ENCODE measurements at regions of chr5 and their contacts with region 1.

Region 1: DNA sequence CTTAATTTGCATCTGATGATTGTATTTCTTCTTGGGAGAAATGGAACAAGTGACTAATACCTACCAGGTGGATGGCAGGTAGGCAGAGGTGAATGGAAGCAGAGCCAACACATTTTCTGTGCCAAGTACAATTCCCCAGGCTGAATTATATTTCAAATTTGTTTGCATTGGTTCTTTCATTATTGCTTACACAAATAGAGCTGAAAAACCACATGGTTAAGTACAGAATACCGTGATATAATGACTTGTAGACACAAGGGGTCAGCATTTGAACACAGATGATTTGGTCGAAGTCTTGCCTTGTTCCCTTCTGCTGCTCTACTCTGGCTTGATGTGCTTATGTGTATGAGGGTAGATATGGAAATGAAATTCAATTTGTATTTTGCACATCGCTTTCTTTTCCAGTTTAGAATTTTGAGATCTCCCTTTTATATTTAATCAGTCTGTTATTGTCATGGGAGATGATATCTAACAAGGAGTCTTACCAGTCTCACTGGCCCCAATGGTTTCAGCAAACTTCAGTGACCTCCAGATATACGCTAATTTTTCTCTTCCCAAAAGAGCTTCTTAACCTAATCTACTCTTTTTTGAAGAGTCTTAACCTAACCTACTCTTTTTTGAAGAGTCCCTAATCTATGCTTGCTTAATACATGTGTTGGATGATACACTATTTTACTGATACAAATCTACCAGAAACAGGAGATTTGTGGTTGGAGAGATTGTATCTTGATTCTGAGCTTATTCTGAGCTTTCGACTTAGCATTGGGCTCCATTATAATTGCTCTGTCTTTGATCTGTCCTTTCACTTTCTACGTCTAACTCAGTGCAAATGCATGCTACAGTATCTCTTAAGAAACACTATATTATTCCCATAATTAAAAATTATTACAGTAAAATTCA is 88.1 kb downstream of the PCSK1 start:
- DNase-seq: peak; percentile 66
- H3K4me3 ChIP-seq: no peak overlapping the region
- H3K27ac ChIP-seq: no peak overlapping the region
- H3K27me3 ChIP-seq: no peaks in the 10 kb centered on the region
- CTCF ChIP-seq: peak; percentile 61

Region 2: DNA sequence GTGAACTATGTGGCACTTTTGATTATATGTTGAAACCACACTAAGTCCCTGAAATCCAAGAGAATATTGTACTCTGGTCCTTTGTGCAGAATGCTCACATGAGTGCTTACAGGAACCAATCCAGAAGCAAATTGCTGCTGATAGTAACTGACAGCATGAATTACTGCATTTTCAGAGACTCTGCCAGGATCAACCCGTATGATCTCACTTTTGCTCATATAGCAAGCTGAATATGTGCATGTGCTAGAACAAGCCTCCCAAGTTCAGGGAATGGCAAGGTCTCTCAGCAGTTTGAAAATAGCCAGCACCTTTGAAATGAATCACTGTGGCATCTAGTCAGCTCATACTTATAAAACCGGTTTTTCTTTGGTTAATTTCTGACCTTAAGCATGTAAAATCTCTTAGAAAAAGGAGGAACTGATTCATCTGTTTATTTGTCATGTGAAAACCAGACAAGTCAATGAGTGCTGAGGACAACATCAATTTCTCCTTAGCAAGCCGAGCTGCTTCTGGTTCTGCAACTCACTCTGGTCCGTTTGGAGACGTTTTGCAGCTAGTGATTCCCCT is 167.5 kb before region 1 on chr5:
- CTCF ChIA-PET with region 1: no interaction called
- POLR2A ChIA-PET with region 1: no interaction called
- DNase-seq: peak; percentile 48
- H3K4me3 ChIP-seq: no peak overlapping the region
- H3K27ac ChIP-seq: peak overlapping the region; percentile 33
- H3K27me3 ChIP-seq: no peaks in the 10 kb centered on the region
- CTCF ChIP-seq: no peak

Region 3: GRCh38 chr5:96595300-96596090 is 250.6 kb after region 1 on chr5:
- CTCF ChIA-PET with region 1: interaction called, 239 read pairs
- POLR2A ChIA-PET with region 1: no interaction called
- DNase-seq: no peak
- H3K4me3 ChIP-seq: no peak overlapping the region
- H3K27ac ChIP-seq: no peak overlapping the region
- H3K27me3 ChIP-seq: no peaks in the 10 kb centered on the region
- CTCF ChIP-seq: peak; percentile 38

Region 4: DNA sequence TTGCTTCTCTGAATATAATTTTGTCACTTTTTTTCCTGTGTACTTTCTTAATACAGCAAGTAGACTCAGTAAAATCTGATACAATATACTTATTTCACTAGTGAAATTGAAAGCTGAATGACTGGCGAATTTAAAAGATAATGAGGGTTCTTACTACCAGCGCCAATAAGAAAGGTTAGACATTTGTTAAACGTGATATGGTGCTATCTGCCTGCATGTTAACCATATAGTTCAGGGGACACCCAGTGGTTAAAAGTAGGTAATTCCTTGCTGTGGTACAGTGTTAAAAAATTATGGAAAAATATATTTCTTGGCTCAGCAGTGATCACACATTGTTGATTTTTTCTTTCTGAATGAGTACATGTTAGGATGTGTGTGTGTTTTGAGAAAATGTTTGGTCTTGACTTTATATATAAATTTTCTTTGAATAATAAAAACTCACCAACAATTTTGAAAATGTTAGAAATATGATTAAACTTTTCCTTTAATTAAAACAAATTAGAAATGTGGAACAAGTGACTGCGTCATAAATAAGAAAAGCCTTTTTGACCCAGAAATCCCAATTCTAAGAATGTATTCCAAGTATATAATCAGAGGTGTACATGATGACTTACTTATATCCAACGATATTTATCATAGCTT is 343.0 kb after region 1 on chr5:
- CTCF ChIA-PET with region 1: interaction called, 22 read pairs
- POLR2A ChIA-PET with region 1: no interaction called
- DNase-seq: no peak
- H3K4me3 ChIP-seq: no peak overlapping the region
- H3K27ac ChIP-seq: no peak overlapping the region
- H3K27me3 ChIP-seq: no peaks in the 10 kb centered on the region
- CTCF ChIP-seq: peak; percentile 77

Region 5: DNA sequence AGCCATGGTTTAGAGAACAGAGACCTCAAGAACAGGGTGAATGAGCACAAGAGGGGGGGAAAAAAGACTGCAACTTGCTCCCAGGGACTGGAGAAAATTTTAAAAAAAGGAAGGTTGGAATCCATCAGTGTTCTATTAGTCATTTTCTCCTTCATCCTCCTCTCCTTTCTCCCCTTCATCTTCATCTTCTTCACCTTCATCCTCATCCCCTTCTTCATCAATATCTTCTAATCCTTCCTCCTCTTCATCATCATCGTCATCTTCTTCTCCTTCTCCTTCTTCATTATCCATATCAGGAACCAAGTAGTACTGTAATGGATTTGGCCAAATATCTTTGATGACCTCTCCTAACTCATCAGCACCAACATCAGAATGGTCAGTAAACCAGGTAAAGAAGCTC is 711.3 kb after region 1 on chr5:
- CTCF ChIA-PET with region 1: no interaction called
- POLR2A ChIA-PET with region 1: no interaction called
- DNase-seq: no peak
- H3K4me3 ChIP-seq: no peak overlapping the region
- H3K27ac ChIP-seq: no peak overlapping the region
- H3K27me3 ChIP-seq: peaks cover 21% of the 10 kb centered on the region
- CTCF ChIP-seq: no peak